CD8-positive, alpha-beta T cell (primary cell): ENCODE measurements at regions of chr17 and their contacts with region 1.

Region 1: DNA sequence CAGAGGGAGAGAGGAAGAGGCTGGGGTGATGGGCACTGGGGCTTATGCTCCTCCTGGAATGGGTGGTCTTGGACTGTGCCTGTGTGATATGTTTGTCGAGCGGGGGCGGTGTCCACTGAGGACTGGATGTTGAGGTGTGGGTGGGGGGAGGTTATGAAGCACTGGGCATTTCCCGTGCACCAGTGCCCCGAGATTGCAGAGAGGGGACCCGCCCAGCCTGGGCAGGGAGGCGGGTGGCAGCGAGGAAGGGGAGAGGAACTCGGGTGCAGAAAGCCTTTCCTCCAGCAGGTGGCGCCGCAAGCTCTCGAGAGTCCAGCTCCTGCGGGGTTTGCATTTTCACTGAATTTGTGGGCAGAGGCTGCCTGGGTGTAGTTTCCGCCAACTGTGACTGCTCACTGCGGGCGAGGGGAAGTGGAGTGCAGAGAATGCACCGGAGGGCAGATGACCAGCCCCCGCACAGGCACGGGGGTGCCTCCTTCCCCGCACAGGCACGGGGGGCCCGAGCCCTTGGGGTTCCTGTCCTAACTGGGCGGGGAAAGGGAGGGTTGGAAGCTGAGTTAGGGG is 190.6 kb downstream of the SEC14L1 start:
- DNase-seq: peak; percentile 90 to 99 (median 96)
- ATAC-seq: peak; percentile 79
- H3K4me3 ChIP-seq: peak overlapping the region; percentile 10 to 42
- H3K4me3 Mint-ChIP-seq: peak overlapping the region; percentile 79
- H3K27ac ChIP-seq: peak overlapping the region; percentile 32 to 56
- H3K27ac Mint-ChIP-seq: peak overlapping the region; percentile 90
- H3K4me1 ChIP-seq: peaks cover 41% of the 10 kb centered on the region
- H3K4me1 Mint-ChIP-seq: peaks cover 46% of the 10 kb centered on the region
- H3K27me3 ChIP-seq: no peaks in the 10 kb centered on the region
- H3K27me3 Mint-ChIP-seq: no peaks in the 10 kb centered on the region
- CTCF ChIP-seq: peak; percentile 87

Region 2: GRCh38 chr17:77319211-77320043 is 12.0 kb before region 1 on chr17:
- CTCF ChIA-PET with region 1: no interaction called
- POLR2A ChIA-PET with region 1: no interaction called
- intact Hi-C with region 1: no loop called
- DNase-seq: peak in 6 of 9 experiments; percentile 34 to 78 (median 56)
- ATAC-seq: peak; percentile 78
- H3K4me3 ChIP-seq: peak overlapping the region in 1 of 2 experiments; percentile 23
- H3K4me3 Mint-ChIP-seq: peak overlapping the region; percentile 63
- H3K27ac ChIP-seq: no peak overlapping the region
- H3K27ac Mint-ChIP-seq: peak overlapping the region; percentile 49
- H3K4me1 ChIP-seq: peaks cover 36% of the 10 kb centered on the region
- H3K4me1 Mint-ChIP-seq: peaks cover 21% of the 10 kb centered on the region
- H3K27me3 ChIP-seq: no peaks in the 10 kb centered on the region
- H3K27me3 Mint-ChIP-seq: no peaks in the 10 kb centered on the region
- CTCF ChIP-seq: no peak

Region 3: GRCh38 chr17:77349976-77350830 is 18.8 kb after region 1 on chr17:
- CTCF ChIA-PET with region 1: interaction called, 10 read pairs
- POLR2A ChIA-PET with region 1: no interaction called
- intact Hi-C with region 1: no loop called
- DNase-seq: peak in 1 of 9 experiments; percentile 35
- ATAC-seq: no peak
- H3K4me3 ChIP-seq: no peak overlapping the region
- H3K4me3 Mint-ChIP-seq: no peak overlapping the region
- H3K27ac ChIP-seq: no peak overlapping the region
- H3K27ac Mint-ChIP-seq: no peak overlapping the region
- H3K4me1 ChIP-seq: peaks cover 18% of the 10 kb centered on the region
- H3K4me1 Mint-ChIP-seq: peaks cover 27% of the 10 kb centered on the region
- H3K27me3 ChIP-seq: no peaks in the 10 kb centered on the region
- H3K27me3 Mint-ChIP-seq: no peaks in the 10 kb centered on the region
- CTCF ChIP-seq: no peak

Region 4: GRCh38 chr17:77382966-77383612 is 51.7 kb after region 1 on chr17:
- CTCF ChIA-PET with region 1: interaction called, 36 read pairs
- POLR2A ChIA-PET with region 1: interaction called, 19 read pairs
- intact Hi-C with region 1: loop called in 1 of 2 experiments (anchors 2 kb)
- DNase-seq: no peak
- ATAC-seq: no peak
- H3K4me3 ChIP-seq: peak overlapping the region; percentile 30 to 34
- H3K4me3 Mint-ChIP-seq: peak overlapping the region; percentile 75
- H3K27ac ChIP-seq: peak overlapping the region in 1 of 2 experiments; percentile 40
- H3K27ac Mint-ChIP-seq: peak overlapping the region; percentile 91
- H3K4me1 ChIP-seq: peaks cover 95% of the 10 kb centered on the region
- H3K4me1 Mint-ChIP-seq: peaks cover 89% of the 10 kb centered on the region
- H3K27me3 ChIP-seq: no peaks in the 10 kb centered on the region
- H3K27me3 Mint-ChIP-seq: no peaks in the 10 kb centered on the region
- CTCF ChIP-seq: no peak

Region 5: GRCh38 chr17:77420804-77421629 is 89.6 kb after region 1 on chr17:
- CTCF ChIA-PET with region 1: interaction called, 74 read pairs
- POLR2A ChIA-PET with region 1: interaction called, 16 read pairs
- intact Hi-C with region 1: no loop called
- DNase-seq: peak in 8 of 9 experiments; percentile 39 to 79 (median 70)
- ATAC-seq: peak; percentile 62
- H3K4me3 ChIP-seq: peak overlapping the region; percentile 12 to 28
- H3K4me3 Mint-ChIP-seq: peak overlapping the region; percentile 65
- H3K27ac ChIP-seq: peak overlapping the region; percentile 22 to 57
- H3K27ac Mint-ChIP-seq: peak overlapping the region; percentile 91
- H3K4me1 ChIP-seq: peaks cover 75% of the 10 kb centered on the region
- H3K4me1 Mint-ChIP-seq: peaks cover 67% of the 10 kb centered on the region
- H3K27me3 ChIP-seq: no peaks in the 10 kb centered on the region
- H3K27me3 Mint-ChIP-seq: no peaks in the 10 kb centered on the region
- CTCF ChIP-seq: no peak

Region 6: DNA sequence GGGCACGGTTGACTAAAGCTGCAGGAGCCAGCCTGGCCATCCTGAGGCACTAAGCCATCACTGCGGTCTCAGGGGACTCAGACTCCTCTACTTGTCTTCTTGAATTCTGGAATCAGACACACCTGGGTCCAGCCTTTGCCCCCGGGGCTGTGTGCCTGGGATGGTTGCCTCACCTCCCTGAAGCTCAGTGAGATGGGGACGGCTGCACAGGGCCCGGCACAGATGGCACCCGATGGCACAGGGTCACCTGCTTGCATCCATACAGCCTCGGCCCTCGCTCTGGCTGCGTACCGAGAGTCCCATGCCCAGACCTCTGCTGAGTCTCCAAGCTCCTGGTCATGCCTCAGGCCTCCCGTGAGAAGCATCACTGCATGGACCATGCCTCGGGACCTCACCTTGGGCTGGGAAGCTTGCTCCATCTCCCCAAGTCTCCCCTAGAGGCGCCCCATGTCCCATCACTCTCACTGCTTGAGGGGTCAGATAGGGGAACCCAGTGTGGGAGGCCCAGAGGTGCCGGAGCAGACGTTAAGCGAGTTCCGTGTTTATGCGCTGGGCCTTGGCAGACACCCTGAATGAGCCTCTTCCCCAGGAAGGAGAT is 125.7 kb after region 1 on chr17:
- CTCF ChIA-PET with region 1: interaction called, 8 read pairs
- POLR2A ChIA-PET with region 1: interaction called, 12 read pairs
- intact Hi-C with region 1: loop called in 1 of 2 experiments (anchors 1 kb)
- DNase-seq: peak in 5 of 9 experiments; percentile 53 to 72 (median 59)
- ATAC-seq: peak; percentile 7
- H3K4me3 ChIP-seq: peak overlapping the region; percentile 93 to 99
- H3K4me3 Mint-ChIP-seq: peak overlapping the region; percentile 94
- H3K27ac ChIP-seq: peak overlapping the region; percentile 80 to 86
- H3K27ac Mint-ChIP-seq: peak overlapping the region; percentile 100
- H3K4me1 ChIP-seq: peaks cover 75% of the 10 kb centered on the region
- H3K4me1 Mint-ChIP-seq: peaks cover 66% of the 10 kb centered on the region
- H3K27me3 ChIP-seq: no peaks in the 10 kb centered on the region
- H3K27me3 Mint-ChIP-seq: no peaks in the 10 kb centered on the region
- CTCF ChIP-seq: no peak